BJ (cell line): ENCODE measurements at regions of chr7 and their contacts with region 1.

Region 1: GRCh38 chr7:81367335-81367931 is 402.4 kb downstream of the HGF start:
- DNase-seq: peak; percentile 63
- H3K4me3 ChIP-seq: no peak overlapping the region
- H3K27me3 ChIP-seq: no peaks in the 10 kb centered on the region
- CTCF ChIP-seq: no peak

Region 2: GRCh38 chr7:80770061-80770460 is 597.4 kb before region 1 on chr7:
- CTCF ChIA-PET with region 1: no interaction called
- POLR2A ChIA-PET with region 1: interaction called, 15 read pairs
- DNase-seq: no peak
- H3K4me3 ChIP-seq: no peak overlapping the region
- H3K27me3 ChIP-seq: no peaks in the 10 kb centered on the region
- CTCF ChIP-seq: no peak

Region 3: DNA sequence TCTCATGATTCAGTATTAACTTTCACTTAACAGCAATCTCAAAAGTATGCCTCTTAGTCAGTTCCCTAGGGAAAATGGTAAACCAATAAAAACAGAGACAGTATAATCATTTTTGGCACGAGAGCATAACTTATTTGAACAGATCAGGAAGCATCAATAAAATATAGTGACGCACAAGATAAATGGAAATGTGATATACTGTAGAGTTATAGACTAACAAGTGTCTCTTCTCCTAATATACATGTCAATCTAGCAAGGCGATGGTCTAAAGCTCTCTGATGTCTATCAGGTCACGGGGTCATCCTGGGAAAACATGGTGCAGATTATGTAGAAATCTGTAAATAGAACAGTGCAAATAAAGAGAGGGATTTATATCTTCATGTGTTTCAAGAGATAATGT is 270.8 kb after region 1 on chr7:
- CTCF ChIA-PET with region 1: no interaction called
- POLR2A ChIA-PET with region 1: no interaction called
- DNase-seq: peak; percentile 55
- H3K4me3 ChIP-seq: no peak overlapping the region
- H3K27me3 ChIP-seq: no peaks in the 10 kb centered on the region
- CTCF ChIP-seq: no peak